Activated CD8-positive, alpha-beta T cell treated with anti-CD3 and anti-CD28 coated beads, Interleukin-2, amount 10 ng/mL, durations not matched to agents 7 days and 5 days (primary cell): ENCODE measurements at regions of chr22 and their contacts with region 1.

Region 1: DNA sequence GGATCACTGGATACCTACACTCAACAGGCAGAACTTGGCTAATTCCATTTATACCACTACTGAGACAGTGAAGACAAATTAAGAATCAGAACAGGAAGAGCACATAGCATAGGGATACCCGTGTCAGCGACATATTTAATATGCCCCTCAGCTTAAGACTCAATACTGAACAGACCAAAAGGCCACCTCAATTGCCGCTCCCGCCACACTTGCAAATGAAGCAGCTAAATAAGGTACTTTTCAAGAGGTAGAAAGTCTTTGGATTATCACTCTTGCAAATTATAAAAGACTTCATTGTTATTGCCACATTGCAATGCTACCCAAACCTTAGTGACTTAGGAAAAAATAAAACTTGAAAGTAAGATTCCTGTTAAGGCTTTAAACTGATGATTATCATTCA is 3.1 kb downstream of the DDX17 start:
- DNase-seq: no peak
- ATAC-seq: no peak
- H3K4me3 Mint-ChIP-seq: peak overlapping the region; percentile 99
- H3K27ac Mint-ChIP-seq: peak overlapping the region; percentile 5
- H3K4me1 Mint-ChIP-seq: peaks cover 63% of the 10 kb centered on the region
- H3K27me3 Mint-ChIP-seq: no peaks in the 10 kb centered on the region

Region 2: DNA sequence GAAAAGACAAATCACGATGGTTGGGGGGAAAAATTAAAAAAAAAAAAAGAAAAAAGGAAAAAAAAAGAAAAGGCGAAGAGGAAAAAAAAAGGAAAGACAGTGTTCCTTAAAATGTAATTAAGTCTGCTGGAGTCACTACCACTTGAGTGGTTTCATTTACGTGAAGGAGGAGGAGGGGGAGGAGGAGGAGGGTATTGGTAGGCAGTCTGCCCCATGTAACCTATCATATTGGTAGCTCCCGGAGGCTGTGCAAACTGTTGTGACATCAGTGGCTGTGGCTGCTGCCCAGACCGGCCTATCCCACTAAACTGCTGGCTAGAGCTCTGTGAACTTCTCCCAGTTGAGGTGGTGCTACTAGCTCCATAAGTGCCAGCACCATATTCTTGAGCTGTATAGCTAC is 17.2 kb before region 1 on chr22:
- CTCF ChIA-PET with region 1: interaction called, 10 read pairs
- POLR2A ChIA-PET with region 1: interaction called, 3 read pairs
- DNase-seq: no peak
- ATAC-seq: no peak
- H3K4me3 Mint-ChIP-seq: no peak overlapping the region
- H3K27ac Mint-ChIP-seq: no peak overlapping the region
- H3K4me1 Mint-ChIP-seq: peaks cover 33% of the 10 kb centered on the region
- H3K27me3 Mint-ChIP-seq: no peaks in the 10 kb centered on the region